ENCODE measurements at regions of chr5 and their contacts with region 1.

Region 1: GRCh38 chr5:129172580-129172979 is 78.0 kb downstream of the ISOC1 start:
- DNase-seq: no peak
- H3K4me3 ChIP-seq: no peak overlapping the region
- H3K4me3 Mint-ChIP-seq: no peak overlapping the region
- H3K27ac Mint-ChIP-seq: no peak overlapping the region
- H3K4me1 ChIP-seq: no peaks in the 10 kb centered on the region
- H3K4me1 Mint-ChIP-seq: no peaks in the 10 kb centered on the region
- H3K27me3 ChIP-seq: no peaks in the 10 kb centered on the region
- H3K27me3 Mint-ChIP-seq: peaks cover 5% of the 10 kb centered on the region
- CTCF ChIP-seq: no peak

Region 2: DNA sequence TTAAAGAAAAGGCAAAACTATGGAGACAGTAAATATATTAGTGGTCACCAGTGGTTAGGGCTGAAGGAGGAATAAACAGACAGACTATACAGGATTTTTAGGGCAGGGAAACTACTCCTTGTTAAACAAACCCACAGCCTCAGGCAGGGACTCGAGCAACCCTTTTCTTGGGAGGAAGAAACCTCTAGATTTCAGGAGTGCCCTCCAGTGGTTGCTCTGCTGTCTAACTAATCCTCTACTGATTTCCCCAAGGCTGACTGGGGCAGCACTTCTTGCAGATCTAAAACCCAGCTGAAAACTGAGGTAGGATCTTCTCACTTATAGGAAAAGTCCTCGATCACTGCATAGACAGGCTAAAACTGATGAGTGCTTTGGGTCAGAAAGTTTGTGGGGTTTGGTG is 98.7 kb after region 1 on chr5:
- CTCF ChIA-PET with region 1: no interaction called
- POLR2A ChIA-PET with region 1: no interaction called
- intact Hi-C with region 1: loop called (anchors 1 kb)
- DNase-seq: peak in 1 of 2 experiments; percentile 28
- H3K4me3 ChIP-seq: no peak overlapping the region
- H3K4me3 Mint-ChIP-seq: no peak overlapping the region
- H3K27ac Mint-ChIP-seq: no peak overlapping the region
- H3K4me1 ChIP-seq: no peaks in the 10 kb centered on the region
- H3K4me1 Mint-ChIP-seq: no peaks in the 10 kb centered on the region
- H3K27me3 ChIP-seq: no peaks in the 10 kb centered on the region
- H3K27me3 Mint-ChIP-seq: no peaks in the 10 kb centered on the region
- CTCF ChIP-seq: peak in 1 of 2 experiments; percentile 20

Measured in Caco-2 (cell line).